ENCODE measurements at regions of chr12 and their contacts with region 1.

Region 1: DNA sequence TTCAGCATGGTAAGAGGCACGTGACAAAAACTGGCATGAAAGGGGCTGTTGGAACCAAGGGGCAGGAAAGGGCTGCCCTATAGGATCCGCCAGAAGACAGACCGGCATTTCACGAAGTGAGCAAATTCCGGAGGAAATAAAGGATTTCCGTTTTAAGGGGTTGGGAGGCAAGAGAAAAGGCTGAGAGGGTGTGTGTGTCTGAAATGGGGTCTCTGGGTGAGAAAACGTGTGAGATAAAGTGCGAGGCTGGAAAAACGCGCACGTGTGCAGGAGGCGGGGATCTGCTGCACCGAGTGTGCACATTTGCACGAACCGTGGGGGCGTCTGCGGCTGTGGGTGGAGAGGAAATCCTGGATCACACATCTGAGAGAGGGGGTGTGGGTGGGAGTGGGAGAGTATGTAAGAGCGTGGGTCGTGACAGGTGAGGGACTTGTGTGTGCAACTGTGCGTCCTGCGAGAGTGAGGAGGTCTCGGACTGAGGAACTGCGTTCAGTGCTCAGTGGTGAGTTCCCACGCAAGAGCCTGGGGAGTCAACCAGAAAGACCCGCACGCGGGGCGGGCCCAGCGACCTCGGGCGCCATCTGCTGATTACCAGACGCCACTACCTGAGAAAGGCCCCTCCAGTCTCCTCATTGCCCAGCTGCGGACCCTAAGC is 37.0 kb upstream of the P2RX7 start:
- DNase-seq: peak; percentile 59 to 88 (median 81)
- ATAC-seq: peak; percentile 78
- H3K4me3 ChIP-seq: peak overlapping the region; percentile 44 to 47
- H3K4me3 Mint-ChIP-seq: peak overlapping the region; percentile 81
- H3K27ac ChIP-seq: no peak overlapping the region
- H3K27ac Mint-ChIP-seq: no peak overlapping the region
- H3K4me1 ChIP-seq: peaks cover 47% of the 10 kb centered on the region
- H3K4me1 Mint-ChIP-seq: peaks cover 49% of the 10 kb centered on the region
- H3K27me3 ChIP-seq: no peaks in the 10 kb centered on the region
- H3K27me3 Mint-ChIP-seq: no peaks in the 10 kb centered on the region
- CTCF ChIP-seq: peak; percentile 81

Region 2: DNA sequence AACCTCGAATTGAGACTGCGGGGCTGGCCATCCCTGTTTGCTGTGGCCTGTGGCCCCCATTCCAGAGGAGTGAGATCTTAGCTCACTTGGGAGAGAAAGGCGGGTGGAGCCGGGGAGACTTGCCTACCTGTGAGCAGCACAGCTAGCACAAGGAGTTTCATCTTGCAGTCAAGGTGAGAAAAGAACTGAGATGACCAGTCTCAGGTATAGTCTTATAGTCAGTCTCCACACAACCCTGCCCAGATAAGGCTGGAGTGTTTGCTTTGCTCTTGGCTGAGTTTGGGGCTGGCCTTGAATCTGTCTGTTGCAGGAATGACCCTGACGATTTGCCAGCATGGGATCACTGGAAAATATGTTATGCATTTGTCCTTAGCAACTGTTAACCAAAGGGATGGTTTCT is 768.1 kb before region 1 on chr12 and contains the start of gene PLA2G1B:
- CTCF ChIA-PET with region 1: no interaction called
- POLR2A ChIA-PET with region 1: no interaction called
- intact Hi-C with region 1: loop called in 1 of 2 experiments (anchors 2 kb)
- DNase-seq: no peak
- ATAC-seq: no peak
- H3K4me3 ChIP-seq: no peak within 1 kb of the TSS
- H3K4me3 Mint-ChIP-seq: no peak within 1 kb of the TSS
- H3K27ac ChIP-seq: no peak within 1 kb of the TSS
- H3K27ac Mint-ChIP-seq: no peak within 1 kb of the TSS
- H3K4me1 ChIP-seq: no peaks in the 10 kb centered on the region
- H3K4me1 Mint-ChIP-seq: peaks cover 7% of the 10 kb centered on the region
- H3K27me3 ChIP-seq: no peaks in the 10 kb centered on the region
- H3K27me3 Mint-ChIP-seq: peaks cover 3% of the 10 kb centered on the region
- CTCF ChIP-seq: no peak
- total RNA-seq, gene PLA2G1B: not detected

Region 3: GRCh38 chr12:120944645-120945231 is 150.9 kb before region 1 on chr12:
- CTCF ChIA-PET with region 1: interaction called, 3 read pairs
- POLR2A ChIA-PET with region 1: no interaction called
- intact Hi-C with region 1: loop called (anchors 1 to 5 kb)
- DNase-seq: peak; percentile 21 to 75 (median 65)
- ATAC-seq: peak; percentile 69
- H3K4me3 ChIP-seq: no peak overlapping the region
- H3K4me3 Mint-ChIP-seq: no peak overlapping the region
- H3K27ac ChIP-seq: no peak overlapping the region
- H3K27ac Mint-ChIP-seq: no peak overlapping the region
- H3K4me1 ChIP-seq: no peaks in the 10 kb centered on the region
- H3K4me1 Mint-ChIP-seq: peaks cover 4% of the 10 kb centered on the region
- H3K27me3 ChIP-seq: no peaks in the 10 kb centered on the region
- H3K27me3 Mint-ChIP-seq: no peaks in the 10 kb centered on the region
- CTCF ChIP-seq: peak; percentile 80

Region 4: GRCh38 chr12:121005346-121005815 is 90.3 kb before region 1 on chr12:
- CTCF ChIA-PET with region 1: interaction called, 4 read pairs
- POLR2A ChIA-PET with region 1: no interaction called
- intact Hi-C with region 1: loop called (anchors 1 kb)
- DNase-seq: peak in 7 of 9 experiments; percentile 11 to 66 (median 33)
- ATAC-seq: peak; percentile 71
- H3K4me3 ChIP-seq: no peak overlapping the region
- H3K4me3 Mint-ChIP-seq: no peak overlapping the region
- H3K27ac ChIP-seq: no peak overlapping the region
- H3K27ac Mint-ChIP-seq: no peak overlapping the region
- H3K4me1 ChIP-seq: no peaks in the 10 kb centered on the region
- H3K4me1 Mint-ChIP-seq: peaks cover 4% of the 10 kb centered on the region
- H3K27me3 ChIP-seq: no peaks in the 10 kb centered on the region
- H3K27me3 Mint-ChIP-seq: no peaks in the 10 kb centered on the region
- CTCF ChIP-seq: peak; percentile 50